Gastrocnemius medialis (tissue), 4 donors: ENCODE measurements at regions of chr7 and their contacts with region 1.

Region 1: DNA sequence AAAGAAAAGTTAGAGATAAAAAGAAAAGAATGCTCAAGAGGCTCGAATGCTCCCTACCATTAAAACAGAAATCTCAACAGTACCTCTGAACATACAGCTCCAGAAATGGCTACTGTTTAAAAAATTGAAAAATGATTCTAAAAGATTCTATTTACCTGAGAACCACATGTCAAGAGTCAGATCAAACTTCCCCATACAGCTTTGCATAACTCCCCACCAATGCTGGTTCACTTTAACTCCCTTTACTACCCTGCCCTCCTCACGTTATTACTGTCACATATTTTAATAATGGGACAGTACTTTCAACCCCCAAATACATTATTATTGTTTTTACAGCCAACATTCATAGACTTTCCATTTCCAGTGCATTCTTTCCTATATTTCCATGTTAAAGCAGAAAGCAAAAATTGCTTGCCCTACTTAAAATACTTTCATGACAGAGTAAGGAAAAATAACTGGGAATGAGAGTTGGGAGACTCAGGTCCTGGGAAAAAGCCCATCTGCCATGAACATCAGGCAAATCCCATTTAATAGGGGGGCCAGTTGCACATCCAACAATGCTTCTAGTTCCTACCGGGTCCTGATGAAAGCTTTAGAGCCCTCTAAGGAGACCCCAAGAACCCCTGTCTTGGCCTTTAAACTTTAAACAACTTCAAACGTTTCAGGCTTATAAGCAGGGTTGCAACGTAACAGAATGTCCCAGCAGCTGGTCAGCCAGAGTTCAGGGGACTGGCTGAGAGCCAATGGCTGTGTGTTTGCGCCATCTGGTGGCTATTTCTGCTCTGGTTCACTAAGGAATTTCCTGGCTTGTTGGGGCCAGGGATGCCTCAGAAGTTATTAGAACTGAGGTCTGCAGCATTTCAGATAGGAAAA is 247.4 kb downstream of the ELMO1 start:
- DNase-seq: peak; percentile 76 to 79
- ATAC-seq: peak; percentile 94 to 97
- H3K4me3 ChIP-seq: no peak overlapping the region
- H3K27ac ChIP-seq: peak overlapping the region; percentile 48 to 80 (median 65)
- H3K4me1 ChIP-seq: peaks cover 17 to 18% of the 10 kb centered on the region in 2 donors
- H3K27me3 ChIP-seq: no peaks in the 10 kb centered on the region
- CTCF ChIP-seq: peak; percentile 65 to 83 (median 73)
- POLR2A ChIP-seq: no peak

Region 2: GRCh38 chr7:36487756-36488336 is 713.4 kb before region 1 on chr7:
- in situ Hi-C with region 1: loop called in 1 of 4 experiments (anchors 10 kb)
- intact Hi-C with region 1: no loop called
- DNase-seq: no peak
- ATAC-seq: no peak
- H3K4me3 ChIP-seq: no peak overlapping the region
- H3K27ac ChIP-seq: no peak overlapping the region
- H3K4me1 ChIP-seq: no peaks in the 10 kb centered on the region
- H3K27me3 ChIP-seq: no peaks in the 10 kb centered on the region
- CTCF ChIP-seq: peak in 3 of 5 experiments; percentile 20 to 44 (median 43)
- POLR2A ChIP-seq: no peak

Region 3: DNA sequence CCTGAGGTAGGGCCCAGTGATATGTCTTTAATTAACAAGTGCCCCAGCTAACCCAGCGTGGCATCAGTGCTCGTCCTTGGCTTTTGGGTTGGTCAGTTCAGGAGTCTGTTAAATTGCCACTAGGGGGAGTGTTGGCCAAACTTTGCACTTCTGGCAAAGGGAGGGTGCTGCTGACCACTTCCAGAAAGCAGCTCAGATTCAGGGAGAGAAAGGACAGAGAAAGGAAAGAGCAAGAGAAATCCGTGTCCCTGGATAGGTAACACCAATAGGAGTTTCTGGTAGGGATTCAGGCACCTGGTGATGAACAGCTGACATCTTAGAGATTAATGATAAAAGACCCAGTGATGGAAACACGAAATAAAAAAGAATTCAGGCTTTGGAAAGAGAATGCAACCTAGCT is 233.9 kb before region 1 on chr7:
- in situ Hi-C with region 1: no loop called
- intact Hi-C with region 1: loop called (anchors 5 kb)
- DNase-seq: peak; percentile 26 to 41
- ATAC-seq: peak; percentile 91 to 94
- H3K4me3 ChIP-seq: no peak overlapping the region
- H3K27ac ChIP-seq: no peak overlapping the region
- H3K4me1 ChIP-seq: peaks cover 0 to 12% of the 10 kb centered on the region in 2 donors
- H3K27me3 ChIP-seq: no peaks in the 10 kb centered on the region
- CTCF ChIP-seq: peak; percentile 40 to 81 (median 59)
- POLR2A ChIP-seq: no peak

Region 4: DNA sequence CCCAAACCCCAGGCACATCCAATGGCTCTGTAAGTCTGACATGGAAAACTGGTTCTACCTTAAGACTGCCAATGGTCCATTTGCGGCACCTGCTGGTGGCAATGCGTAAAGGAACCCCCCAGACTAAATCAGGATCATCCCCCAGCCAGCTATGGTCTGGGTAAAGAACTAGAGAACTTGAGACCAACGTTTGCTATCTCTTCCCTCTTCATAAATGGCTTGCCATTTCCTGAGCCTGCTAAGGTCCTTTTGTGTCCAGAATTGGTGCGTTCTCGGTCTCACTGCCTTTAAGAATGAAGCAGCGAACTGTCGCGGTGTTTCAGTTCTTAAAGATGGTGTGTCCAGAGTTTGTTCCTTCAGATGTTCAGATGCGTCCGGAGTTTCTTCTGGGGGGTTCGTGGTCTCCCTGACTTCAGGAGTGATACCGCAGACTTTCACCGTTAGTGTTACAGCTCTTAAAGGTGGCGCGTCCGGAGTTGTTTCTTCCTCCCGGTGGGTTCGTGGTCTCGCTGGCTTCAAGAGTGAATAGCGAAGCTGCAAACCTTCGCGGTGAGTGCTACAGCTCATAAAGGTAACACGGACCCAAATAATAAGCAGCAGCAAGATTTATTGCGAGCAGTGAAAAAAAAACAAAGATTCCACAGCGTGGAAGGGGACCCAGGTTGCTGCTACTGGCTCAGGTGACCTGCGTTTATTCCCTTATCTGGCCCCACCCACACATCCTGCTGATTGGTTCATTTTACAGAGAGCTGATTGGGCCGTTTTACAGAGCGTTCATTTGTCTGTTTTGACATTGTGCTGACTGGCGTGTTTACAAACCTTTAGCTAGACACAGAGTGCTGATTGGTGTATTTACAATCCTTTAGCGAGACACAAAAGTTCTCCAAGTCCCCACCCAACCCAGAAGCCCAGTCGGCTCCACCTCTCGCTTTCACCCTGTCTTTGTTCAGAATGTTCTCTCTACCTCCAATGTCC is 152.0 kb after region 1 on chr7:
- in situ Hi-C with region 1: no loop called
- intact Hi-C with region 1: loop called (anchors 10 kb)
- DNase-seq: peak in 1 of 2 donors; percentile 18
- ATAC-seq: no peak
- H3K4me3 ChIP-seq: peak overlapping the region in 1 of 4 donors; percentile 9
- H3K27ac ChIP-seq: peak overlapping the region; percentile 70 to 78 (median 72)
- H3K4me1 ChIP-seq: peaks cover 9 to 25% of the 10 kb centered on the region in 2 donors
- H3K27me3 ChIP-seq: no peaks in the 10 kb centered on the region
- CTCF ChIP-seq: no peak
- POLR2A ChIP-seq: no peak

Region 5: GRCh38 chr7:37467002-37467401 is 265.8 kb after region 1 on chr7:
- in situ Hi-C with region 1: no loop called
- intact Hi-C with region 1: no loop called
- DNase-seq: no peak
- ATAC-seq: no peak
- H3K4me3 ChIP-seq: no peak overlapping the region
- H3K27ac ChIP-seq: no peak overlapping the region
- H3K4me1 ChIP-seq: no peaks in the 10 kb centered on the region
- H3K27me3 ChIP-seq: no peaks in the 10 kb centered on the region
- CTCF ChIP-seq: no peak
- POLR2A ChIP-seq: no peak